BJ (cell line): ENCODE measurements at regions of chr10 and their contacts with region 1.

Region 1: DNA sequence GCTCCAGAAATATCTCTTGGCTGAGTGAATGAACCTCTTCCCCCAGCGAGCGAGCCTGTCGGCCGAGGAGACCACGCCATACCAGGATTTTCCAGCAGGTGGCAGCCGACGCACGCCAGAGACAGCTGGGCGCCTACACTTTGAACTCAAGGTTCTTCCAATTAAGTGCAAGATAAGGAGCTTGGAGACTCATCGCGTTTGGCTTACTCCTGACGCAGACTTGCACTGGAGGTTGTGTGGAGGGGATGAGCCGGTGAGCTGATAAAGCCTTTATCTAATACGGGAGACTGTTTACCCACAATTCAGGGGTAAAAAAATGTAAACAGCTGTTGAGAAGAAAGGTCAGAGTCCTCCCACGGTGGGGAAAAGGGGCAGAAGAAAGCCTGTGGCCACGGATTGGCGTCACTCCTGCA is 45.9 kb upstream of the EMX2 start:
- DNase-seq: no peak
- H3K4me3 ChIP-seq: no peak overlapping the region
- H3K27me3 ChIP-seq: peaks cover 10% of the 10 kb centered on the region
- CTCF ChIP-seq: peak; percentile 96

Region 2: GRCh38 chr10:117442944-117443685 is 53.5 kb before region 1 on chr10:
- CTCF ChIA-PET with region 1: interaction called, 18 read pairs
- POLR2A ChIA-PET with region 1: no interaction called
- DNase-seq: no peak
- H3K4me3 ChIP-seq: no peak overlapping the region
- H3K27me3 ChIP-seq: peaks cover 2% of the 10 kb centered on the region
- CTCF ChIP-seq: peak; percentile 89

Region 3: GRCh38 chr10:117477961-117478670 is 18.5 kb before region 1 on chr10:
- CTCF ChIA-PET with region 1: interaction called, 10 read pairs
- POLR2A ChIA-PET with region 1: no interaction called
- DNase-seq: no peak
- H3K4me3 ChIP-seq: no peak overlapping the region
- H3K27me3 ChIP-seq: peaks cover under 1% of the 10 kb centered on the region
- CTCF ChIP-seq: peak; percentile 47

Region 4: DNA sequence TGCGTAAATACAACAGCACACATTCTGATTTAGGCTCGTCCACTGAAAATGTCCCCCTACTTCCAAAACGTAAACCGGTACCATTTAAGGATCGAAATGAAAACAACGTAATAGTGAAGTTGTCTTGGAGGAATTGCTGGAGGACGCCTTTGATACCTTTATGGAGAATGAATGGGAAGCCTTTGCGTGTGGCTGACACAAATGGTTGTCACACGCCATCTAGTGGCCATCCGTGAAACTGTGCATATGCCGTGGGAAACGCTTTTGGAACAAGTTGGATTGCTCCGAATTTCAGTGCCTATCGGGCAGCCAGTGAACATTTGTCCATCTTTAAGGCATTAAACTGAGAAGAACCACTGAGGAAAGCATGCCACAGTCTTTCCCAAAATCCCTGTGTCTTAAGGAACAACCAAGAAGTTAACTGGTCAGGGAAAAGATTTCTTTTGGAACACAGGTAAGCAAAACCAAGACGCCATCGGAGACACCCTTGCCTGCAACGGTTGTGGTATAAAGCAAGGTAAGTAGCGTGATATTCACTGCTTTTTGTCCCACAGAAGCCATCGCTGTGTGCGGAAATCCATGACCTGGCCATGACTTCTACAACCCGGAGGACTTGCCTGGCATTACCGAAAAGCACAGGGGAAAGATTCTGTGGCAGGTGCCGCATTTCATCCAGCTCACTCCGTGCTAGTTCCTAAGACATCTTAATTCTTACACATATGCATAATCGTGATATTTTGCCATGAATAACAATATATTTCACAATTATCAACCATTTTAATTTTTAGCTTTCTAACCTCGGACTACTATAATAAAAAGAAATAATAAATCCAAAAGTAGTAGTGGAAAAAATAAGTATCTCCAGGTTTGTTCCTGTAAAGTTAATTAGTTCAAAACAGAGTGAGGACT is 744.9 kb after region 1 on chr10:
- CTCF ChIA-PET with region 1: interaction called, 59 read pairs
- POLR2A ChIA-PET with region 1: no interaction called
- DNase-seq: peak; percentile 19
- H3K4me3 ChIP-seq: no peak overlapping the region
- H3K27me3 ChIP-seq: 0 out of 2 replicates have a peak, but pooled peaks cover 2% of the 10 kb centered on the region
- CTCF ChIP-seq: peak; percentile 88

Region 5: DNA sequence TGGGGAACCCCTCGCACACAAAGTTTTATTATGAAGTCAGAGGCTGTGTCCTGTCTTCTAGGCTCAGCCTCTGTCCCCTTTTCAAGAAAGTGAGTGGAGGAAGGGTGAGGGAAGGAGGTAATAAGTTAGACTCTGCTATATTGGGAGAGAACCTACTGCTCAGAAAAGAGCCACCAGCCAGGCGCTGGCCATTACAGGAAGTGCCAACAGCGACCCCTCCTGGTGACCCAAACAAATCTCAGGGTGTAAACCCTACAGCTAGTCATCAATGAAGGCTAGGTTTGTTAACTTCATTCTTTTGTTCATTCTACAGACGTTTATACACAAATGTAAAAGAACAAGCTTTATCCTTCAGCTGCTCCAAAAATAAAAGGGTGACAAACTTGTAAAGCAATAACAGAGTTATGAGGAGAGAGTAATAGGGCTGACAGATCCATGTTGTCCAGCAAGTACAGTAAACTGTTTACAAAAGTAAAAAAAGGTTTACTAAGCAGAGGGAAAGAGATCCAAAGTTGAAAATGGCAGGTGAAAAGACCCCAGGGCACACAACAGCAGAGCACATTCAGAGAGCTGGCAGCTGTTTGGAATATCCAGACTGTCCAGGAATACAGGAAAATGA is 762.8 kb after region 1 on chr10:
- CTCF ChIA-PET with region 1: interaction called, 21 read pairs
- POLR2A ChIA-PET with region 1: no interaction called
- DNase-seq: no peak
- H3K4me3 ChIP-seq: no peak overlapping the region
- H3K27me3 ChIP-seq: no peaks in the 10 kb centered on the region
- CTCF ChIP-seq: peak; percentile 64

Region 6: DNA sequence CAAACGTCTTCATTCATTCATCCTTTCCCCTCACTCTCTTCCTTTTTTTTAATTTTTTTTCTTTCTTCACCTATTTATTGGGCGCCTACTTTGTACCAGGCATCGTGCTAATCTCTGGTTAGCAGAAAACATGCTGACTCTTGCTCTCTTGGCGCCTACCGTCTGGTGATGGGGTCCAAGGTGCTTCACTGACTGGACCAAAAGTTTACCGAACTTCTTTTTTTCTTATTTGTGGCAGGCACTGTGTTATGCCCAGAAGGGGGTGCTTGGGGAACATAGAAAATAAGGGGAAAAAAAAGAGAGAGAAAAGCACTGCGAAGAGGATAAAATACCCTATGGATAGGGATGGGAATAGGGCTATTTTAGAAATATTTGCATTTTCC is 846.0 kb after region 1 on chr10:
- CTCF ChIA-PET with region 1: no interaction called
- POLR2A ChIA-PET with region 1: interaction called, 14 read pairs
- DNase-seq: no peak
- H3K4me3 ChIP-seq: peak overlapping the region; percentile 89
- H3K27me3 ChIP-seq: peaks cover 1% of the 10 kb centered on the region; the same call in 1 of the 2 replicates
- CTCF ChIP-seq: no peak

Region 7: GRCh38 chr10:118423800-118424479 is 927.3 kb after region 1 on chr10:
- CTCF ChIA-PET with region 1: interaction called, 10 read pairs
- POLR2A ChIA-PET with region 1: no interaction called
- DNase-seq: peak; percentile 46
- H3K4me3 ChIP-seq: no peak overlapping the region
- H3K27me3 ChIP-seq: no peaks in the 10 kb centered on the region
- CTCF ChIP-seq: peak; percentile 90